Heart right ventricle (tissue), 16 donors: ENCODE measurements at regions of chr20 and their contacts with region 1.

Region 1: DNA sequence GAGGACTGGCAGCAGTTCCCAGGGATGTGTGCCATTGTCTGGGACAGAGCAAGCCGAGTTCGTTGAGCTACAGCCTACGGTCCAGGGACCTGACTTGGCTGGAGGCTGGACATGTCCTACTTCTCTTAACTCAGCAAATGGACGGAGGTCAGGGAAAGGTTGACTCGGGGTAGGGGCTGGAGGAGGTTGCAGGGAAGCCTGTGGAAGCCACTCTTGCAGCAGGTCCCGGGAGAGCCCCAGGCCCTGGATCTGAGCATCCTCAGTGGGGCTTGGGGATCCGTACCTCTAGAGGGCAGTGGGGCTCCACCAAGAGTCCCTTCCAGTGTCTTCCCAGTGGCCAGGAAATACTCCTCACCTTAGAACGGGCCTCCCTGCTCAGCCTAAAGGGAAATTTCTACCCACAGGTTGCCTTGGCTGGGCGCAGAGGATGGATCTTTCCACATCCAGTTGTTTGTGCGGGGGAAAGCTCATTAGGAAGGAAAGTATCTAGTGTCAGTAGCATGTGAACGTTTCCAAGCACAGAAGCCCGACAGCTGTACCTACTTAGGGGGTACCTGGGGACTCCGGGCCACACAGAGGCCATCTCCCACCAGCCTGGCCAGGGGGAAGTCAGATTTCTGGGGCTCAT is 170.2 kb downstream of the NFATC2 start:
- DNase-seq: peak; percentile 54 to 74
- ATAC-seq: peak; percentile 76 to 95 (median 91)
- H3K4me3 ChIP-seq: no peak overlapping the region
- H3K27ac ChIP-seq: no peak overlapping the region
- H3K4me1 ChIP-seq: peaks cover 4 to 29% (median 16%) of the 10 kb centered on the region in 9 donors
- H3K27me3 ChIP-seq: peaks cover 0 to 2% (median 0%) of the 10 kb centered on the region in 7 donors
- CTCF ChIP-seq: peak; percentile 79 to 93 (median 84)

Region 2: DNA sequence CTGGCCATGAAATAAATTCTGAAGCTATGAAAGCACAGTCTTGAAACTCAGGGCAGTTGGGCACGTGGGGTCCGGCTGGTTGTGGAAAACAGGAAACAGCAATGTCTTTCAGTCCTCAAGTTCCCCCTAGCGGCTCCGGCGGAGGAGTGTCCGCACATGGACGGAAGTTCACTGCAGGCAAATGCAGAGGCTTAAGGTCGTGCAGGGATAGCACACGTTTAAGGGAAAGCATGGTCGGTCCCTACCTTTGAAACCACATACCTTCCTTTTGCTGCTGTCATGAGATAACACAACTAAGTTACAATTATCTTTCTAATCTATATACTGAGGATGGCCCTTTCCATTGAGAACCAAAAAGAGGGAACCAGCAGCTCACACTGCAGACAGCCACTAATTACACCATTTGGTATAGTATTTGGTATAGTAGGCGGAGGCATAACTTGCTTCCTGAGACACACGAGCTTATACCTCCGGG is 222.8 kb after region 1 on chr20:
- intact Hi-C with region 1: loop called (anchors 1 to 5 kb)
- DNase-seq: peak; percentile 83 to 90
- ATAC-seq: peak; percentile 93 to 99 (median 98)
- H3K4me3 ChIP-seq: no peak overlapping the region
- H3K27ac ChIP-seq: peak overlapping the region in 1 of 10 donors; percentile 20
- H3K4me1 ChIP-seq: peaks cover 0 to 15% (median 9%) of the 10 kb centered on the region in 9 donors
- H3K27me3 ChIP-seq: no peaks in the 10 kb centered on the region
- CTCF ChIP-seq: peak; percentile 71 to 93 (median 90)

Region 3: GRCh38 chr20:51624157-51624731 is 252.0 kb after region 1 on chr20:
- intact Hi-C with region 1: loop called in 1 of 10 experiments (anchors 1 kb)
- DNase-seq: peak; percentile 41 to 51
- ATAC-seq: peak in 6 of 8 donors; percentile 33 to 50 (median 44)
- H3K4me3 ChIP-seq: no peak overlapping the region
- H3K27ac ChIP-seq: no peak overlapping the region
- H3K4me1 ChIP-seq: peaks cover 0 to 10% (median 3%) of the 10 kb centered on the region in 9 donors
- H3K27me3 ChIP-seq: no peaks in the 10 kb centered on the region
- CTCF ChIP-seq: peak; percentile 21 to 68 (median 64)